Ovary (tissue), 10 donors: ENCODE measurements at regions of chr5 and their contacts with region 1.

Region 1: GRCh38 chr5:6576861-6577501 is 55.9 kb downstream of the NSUN2 start:
- DNase-seq: no peak
- H3K4me3 ChIP-seq: no peak overlapping the region
- H3K27ac ChIP-seq: no peak overlapping the region
- H3K4me1 ChIP-seq: peaks cover 2% of the 10 kb centered on the region
- H3K27me3 ChIP-seq: no peaks in the 10 kb centered on the region
- CTCF ChIP-seq: peak in 1 of 3 donors; percentile 39
- EP300 ChIP-seq: no peak
- POLR2A ChIP-seq: no peak

Region 2: DNA sequence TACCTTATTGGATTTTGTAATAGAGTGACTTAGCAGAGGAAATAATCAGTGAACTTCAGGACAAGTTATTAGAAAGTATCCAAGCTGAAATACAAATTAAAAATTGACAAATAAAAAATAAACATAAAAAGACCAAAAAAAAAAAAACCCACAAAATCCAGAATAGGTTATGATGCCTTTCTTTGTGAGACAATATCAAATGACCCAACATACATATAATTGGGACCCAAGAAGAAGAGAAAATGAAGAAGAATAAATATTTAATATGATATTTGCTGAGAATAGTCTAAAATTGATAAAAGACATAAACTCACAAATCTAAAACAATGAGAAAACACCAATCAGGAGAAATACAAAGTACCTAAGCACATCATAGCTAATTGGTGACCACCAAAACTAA is 1072.7 kb before region 1 on chr5:
- intact Hi-C with region 1: loop called in 3 of 4 experiments (anchors 5 to 10 kb)
- DNase-seq: no peak
- H3K4me3 ChIP-seq: no peak overlapping the region
- H3K27ac ChIP-seq: no peak overlapping the region
- H3K4me1 ChIP-seq: no peaks in the 10 kb centered on the region
- H3K27me3 ChIP-seq: no peaks in the 10 kb centered on the region
- CTCF ChIP-seq: no peak
- EP300 ChIP-seq: no peak
- POLR2A ChIP-seq: no peak

Region 3: GRCh38 chr5:7705241-7705640 is 1128.3 kb after region 1 on chr5:
- intact Hi-C with region 1: no loop called
- DNase-seq: peak in 4 of 5 donors; percentile 13 to 42 (median 32)
- H3K4me3 ChIP-seq: no peak overlapping the region
- H3K27ac ChIP-seq: peak overlapping the region in 1 of 2 donors; percentile 3
- H3K4me1 ChIP-seq: peaks cover 11% of the 10 kb centered on the region
- H3K27me3 ChIP-seq: no peaks in the 10 kb centered on the region
- CTCF ChIP-seq: no peak
- EP300 ChIP-seq: no peak
- POLR2A ChIP-seq: no peak